Gastrocnemius medialis (tissue), 4 donors: ENCODE measurements at regions of chr9 and their contacts with region 1.

Region 1: GRCh38 chr9:32490601-32491000 is 35.4 kb downstream of the RIGI start:
- DNase-seq: no peak
- ATAC-seq: no peak
- H3K4me3 ChIP-seq: no peak overlapping the region
- H3K27ac ChIP-seq: no peak overlapping the region
- H3K4me1 ChIP-seq: no peaks in the 10 kb centered on the region
- H3K27me3 ChIP-seq: no peaks in the 10 kb centered on the region
- CTCF ChIP-seq: no peak
- POLR2A ChIP-seq: no peak

Region 2: GRCh38 chr9:32454280-32454679 is 36.3 kb before region 1 on chr9:
- in situ Hi-C with region 1: no loop called
- intact Hi-C with region 1: loop called (anchors 5 kb)
- DNase-seq: no peak
- ATAC-seq: no peak
- H3K4me3 ChIP-seq: no peak overlapping the region
- H3K27ac ChIP-seq: no peak overlapping the region
- H3K4me1 ChIP-seq: no peaks in the 10 kb centered on the region
- H3K27me3 ChIP-seq: no peaks in the 10 kb centered on the region
- CTCF ChIP-seq: no peak
- POLR2A ChIP-seq: no peak